ENCODE measurements at regions of chr2 and their contacts with region 1.

Region 1: GRCh38 chr2:142130111-142131009 is 456 bp downstream of the LRP1B start:
- DNase-seq: no peak
- H3K4me3 ChIP-seq: peak overlapping the region; percentile 69
- H3K27ac ChIP-seq: no peak overlapping the region
- H3K27me3 ChIP-seq: peaks cover 12% of the 10 kb centered on the region
- CTCF ChIP-seq: no peak

Region 2: DNA sequence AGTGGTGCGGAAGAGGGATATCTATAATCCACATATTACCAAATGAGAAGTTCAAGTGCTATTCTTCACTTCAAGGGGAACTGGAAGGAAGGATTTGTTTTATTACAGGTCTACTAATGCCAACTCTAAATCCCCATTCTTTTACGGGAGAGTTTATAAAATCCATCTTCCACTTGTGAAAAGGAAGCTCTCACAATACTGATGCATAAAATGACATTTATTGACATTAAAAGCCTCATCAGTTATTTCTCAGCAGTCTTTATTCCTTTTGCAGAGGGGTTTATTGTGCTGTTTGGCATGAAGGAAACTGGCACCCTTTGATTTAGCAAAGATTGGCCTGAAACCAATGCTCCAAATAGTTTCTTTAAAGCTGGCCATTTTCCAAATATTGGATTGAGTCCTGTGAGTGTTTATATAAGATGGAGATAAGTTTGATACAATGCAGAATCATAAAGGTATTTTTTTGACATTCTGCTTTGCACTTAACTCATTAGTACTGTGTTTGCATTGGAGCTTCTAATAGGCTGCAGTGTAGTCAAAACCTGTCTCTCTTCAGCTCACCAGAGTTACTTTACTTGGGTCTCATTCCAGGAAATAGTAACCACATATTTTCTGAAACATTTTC is 26.1 kb before region 1 on chr2:
- CTCF ChIA-PET with region 1: no interaction called
- POLR2A ChIA-PET with region 1: no interaction called
- DNase-seq: no peak
- H3K4me3 ChIP-seq: no peak overlapping the region
- H3K27ac ChIP-seq: no peak overlapping the region
- H3K27me3 ChIP-seq: no peaks in the 10 kb centered on the region
- CTCF ChIP-seq: no peak

Region 3: DNA sequence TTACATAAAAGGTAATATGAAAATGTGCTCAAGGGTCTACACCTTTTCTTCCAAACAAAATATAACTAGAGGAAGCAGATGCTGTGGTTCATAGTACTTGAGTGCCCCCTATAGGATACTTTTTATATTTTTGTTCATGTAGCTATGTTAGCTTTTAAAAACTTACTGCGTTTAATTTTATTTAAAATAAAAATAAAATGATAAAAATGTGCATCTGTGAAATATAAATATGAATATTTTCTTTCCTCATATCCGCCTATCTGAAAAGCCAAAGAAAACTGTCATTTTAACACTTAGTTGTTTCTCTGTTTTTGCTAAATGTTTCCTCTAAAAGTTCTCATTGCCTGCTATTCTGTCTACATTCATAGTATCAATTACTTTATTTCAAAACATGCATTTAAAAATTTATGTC is 10.1 kb after region 1 on chr2:
- CTCF ChIA-PET with region 1: interaction called, 40 read pairs
- POLR2A ChIA-PET with region 1: no interaction called
- DNase-seq: no peak
- H3K4me3 ChIP-seq: no peak overlapping the region
- H3K27ac ChIP-seq: no peak overlapping the region
- H3K27me3 ChIP-seq: no peaks in the 10 kb centered on the region
- CTCF ChIP-seq: peak; percentile 58

Region 4: GRCh38 chr2:142980561-142981378 is 850.4 kb after region 1 on chr2:
- CTCF ChIA-PET with region 1: no interaction called
- POLR2A ChIA-PET with region 1: no interaction called
- DNase-seq: no peak
- H3K4me3 ChIP-seq: no peak overlapping the region
- H3K27ac ChIP-seq: no peak overlapping the region
- H3K27me3 ChIP-seq: no peaks in the 10 kb centered on the region
- CTCF ChIP-seq: peak; percentile 55